ENCODE measurements at regions of chr13 and their contacts with region 1.

Region 1: GRCh38 chr13:45047394-45048310 is 58.3 kb downstream of the GPALPP1 start:
- DNase-seq: peak; percentile 91
- H3K4me3 ChIP-seq: peak overlapping the region; percentile 37 to 51
- H3K27ac ChIP-seq: no peak overlapping the region
- H3K4me1 ChIP-seq: no peaks in the 10 kb centered on the region
- H3K27me3 ChIP-seq: no peaks in the 10 kb centered on the region
- CTCF ChIP-seq: peak; percentile 75 to 84 (median 82)
- POLR2A ChIP-seq: no peak

Region 2: DNA sequence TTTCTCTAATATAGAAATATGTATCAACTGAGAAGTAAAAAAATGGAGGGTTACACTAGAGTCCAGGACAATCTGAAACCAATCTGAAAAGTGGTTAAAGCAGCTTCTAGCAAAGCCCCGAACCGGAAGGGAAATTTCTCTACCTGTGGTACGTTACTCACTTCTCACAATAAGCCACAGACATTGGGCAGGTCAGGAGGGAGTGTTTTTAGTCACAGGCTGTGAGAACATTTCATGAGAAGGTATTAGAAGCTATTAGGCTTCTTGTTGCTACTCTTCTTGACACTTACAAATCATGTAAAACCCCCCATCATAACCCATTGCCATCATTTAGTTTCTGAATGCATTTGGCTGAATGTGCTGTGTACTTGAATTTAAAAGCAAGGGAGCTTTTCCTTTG is 179.3 kb before region 1 on chr13:
- intact Hi-C with region 1: no loop called
- DNase-seq: no peak
- H3K4me3 ChIP-seq: no peak overlapping the region
- H3K27ac ChIP-seq: no peak overlapping the region
- H3K4me1 ChIP-seq: peaks cover 8% of the 10 kb centered on the region
- H3K27me3 ChIP-seq: no peaks in the 10 kb centered on the region
- CTCF ChIP-seq: no peak
- POLR2A ChIP-seq: no peak

Region 3: DNA sequence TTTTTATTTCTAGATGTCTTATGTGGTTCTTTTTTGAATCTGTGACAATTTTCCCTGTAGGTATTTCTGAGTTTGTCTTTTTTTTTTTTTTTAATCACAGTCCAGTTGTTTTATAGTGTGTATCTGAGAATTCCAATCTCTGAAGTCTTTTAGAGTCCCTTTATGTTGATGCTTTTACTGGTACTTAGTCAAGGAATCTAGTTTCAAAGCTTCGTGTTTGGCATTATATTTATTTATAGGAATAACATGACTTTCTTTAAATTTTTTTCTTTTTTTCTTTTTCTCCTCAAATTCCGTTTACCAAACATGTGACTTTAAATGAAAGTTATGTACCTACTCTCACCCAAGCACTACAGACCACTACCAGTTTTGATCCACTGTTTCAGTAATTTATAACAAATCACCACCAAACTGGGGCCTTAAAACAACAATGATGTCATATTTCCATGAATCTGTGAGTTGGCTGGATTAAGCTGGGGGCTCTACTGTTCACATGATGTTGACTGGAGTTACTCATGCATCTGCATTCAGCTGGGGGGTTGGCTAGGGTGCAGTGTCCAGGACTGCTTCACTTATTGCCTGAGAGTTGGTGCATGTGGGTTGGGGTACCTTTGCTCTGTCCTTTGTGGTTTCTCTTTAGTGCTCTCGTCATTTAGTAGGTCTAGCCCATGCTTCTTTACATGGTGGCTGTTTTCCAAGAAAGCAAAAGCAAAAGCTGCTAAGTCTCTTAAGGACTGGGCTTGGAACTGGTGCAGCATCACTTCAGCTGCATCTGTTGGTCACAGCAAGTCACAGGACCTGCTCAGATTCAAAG is 130.9 kb after region 1 on chr13:
- intact Hi-C with region 1: no loop called
- DNase-seq: no peak
- H3K4me3 ChIP-seq: no peak overlapping the region
- H3K27ac ChIP-seq: no peak overlapping the region
- H3K4me1 ChIP-seq: no peaks in the 10 kb centered on the region
- H3K27me3 ChIP-seq: no peaks in the 10 kb centered on the region
- CTCF ChIP-seq: no peak
- POLR2A ChIP-seq: no peak

Region 4: GRCh38 chr13:45301243-45301642 is 253.6 kb after region 1 on chr13:
- intact Hi-C with region 1: loop called (anchors 10 kb)
- DNase-seq: no peak
- H3K4me3 ChIP-seq: no peak overlapping the region
- H3K27ac ChIP-seq: no peak overlapping the region
- H3K4me1 ChIP-seq: no peaks in the 10 kb centered on the region
- H3K27me3 ChIP-seq: no peaks in the 10 kb centered on the region
- CTCF ChIP-seq: no peak
- POLR2A ChIP-seq: no peak

Measured in testis (tissue), 5 donors.